ENCODE measurements at regions of chr17 and their contacts with region 1.

Region 1: GRCh38 chr17:44878627-44879221 is 20.5 kb downstream of the EFTUD2 start:
- DNase-seq: peak; percentile 47
- H3K4me3 ChIP-seq: no peak overlapping the region; a peak in 1 of 4 replicates
- H3K27ac ChIP-seq: no peak overlapping the region; a peak in 1 of 4 replicates
- H3K4me1 ChIP-seq: no peaks in the 10 kb centered on the region
- H3K27me3 ChIP-seq: no peaks in the 10 kb centered on the region
- CTCF ChIP-seq: peak; percentile 80
- EP300 ChIP-seq: no peak
- RAD21 ChIP-seq: peak; percentile 61

Region 2: GRCh38 chr17:44758414-44759085 is 120.2 kb before region 1 on chr17 and contains the start of gene ADAM11:
- CTCF ChIA-PET with region 1: interaction called, 11 read pairs
- POLR2A ChIA-PET with region 1: no interaction called
- DNase-seq: peak; percentile 91
- H3K4me3 ChIP-seq: peak within 1 kb of the TSS in 1 of 2 experiments; percentile 43; a peak in 3 of 4 replicates
- H3K27ac ChIP-seq: no peak within 1 kb of the TSS
- H3K4me1 ChIP-seq: peaks cover 0 to 12% of the 10 kb centered on the region in 2 experiments; a peak in 1 of 4 replicates
- H3K27me3 ChIP-seq: no peaks in the 10 kb centered on the region
- CTCF ChIP-seq: no peak
- EP300 ChIP-seq: no peak
- RAD21 ChIP-seq: no peak
- polyA plus RNA-seq, gene ADAM11: 1.8 and 2.5 TPM in 2 replicates

Region 3: GRCh38 chr17:44864866-44865660 is 13.7 kb before region 1 on chr17:
- CTCF ChIA-PET with region 1: interaction called, 117 read pairs
- POLR2A ChIA-PET with region 1: no interaction called
- DNase-seq: peak; percentile 79
- H3K4me3 ChIP-seq: no peak overlapping the region; a peak in 1 of 4 replicates
- H3K27ac ChIP-seq: no peak overlapping the region
- H3K4me1 ChIP-seq: no peaks in the 10 kb centered on the region
- H3K27me3 ChIP-seq: 0 out of 2 replicates have a peak, but pooled peaks cover 3% of the 10 kb centered on the region
- CTCF ChIP-seq: peak; percentile 87
- EP300 ChIP-seq: no peak
- RAD21 ChIP-seq: peak; percentile 76

Region 4: GRCh38 chr17:44899069-44899782 is 20.5 kb after region 1 on chr17 and contains the start of gene EFTUD2:
- CTCF ChIA-PET with region 1: interaction called, 14 read pairs
- POLR2A ChIA-PET with region 1: no interaction called
- DNase-seq: peak; percentile 96
- H3K4me3 ChIP-seq: peak within 1 kb of the TSS; percentile 92 to 97
- H3K27ac ChIP-seq: peak within 1 kb of the TSS; percentile 94 to 99
- H3K4me1 ChIP-seq: peaks cover 6 to 23% of the 10 kb centered on the region in 2 experiments; a peak in 3 of 4 replicates
- H3K27me3 ChIP-seq: no peaks in the 10 kb centered on the region
- CTCF ChIP-seq: no peak
- EP300 ChIP-seq: no peak; a peak in 1 of 4 replicates
- RAD21 ChIP-seq: no peak
- polyA plus RNA-seq, gene EFTUD2: 79.9 and 82.9 TPM in 2 replicates

Region 5: GRCh38 chr17:44952946-44953475 is 74.3 kb after region 1 on chr17:
- CTCF ChIA-PET with region 1: no interaction called
- POLR2A ChIA-PET with region 1: no interaction called
- DNase-seq: no peak
- H3K4me3 ChIP-seq: no peak overlapping the region
- H3K27ac ChIP-seq: no peak overlapping the region
- H3K4me1 ChIP-seq: peaks cover 0 to 27% of the 10 kb centered on the region in 2 experiments; a peak in 1 of 4 replicates
- H3K27me3 ChIP-seq: no peaks in the 10 kb centered on the region
- CTCF ChIP-seq: no peak
- EP300 ChIP-seq: no peak
- RAD21 ChIP-seq: no peak

Measured in SK-N-SH (cell line).